Left ventricle myocardium superior (tissue), 1 donor: ENCODE measurements at regions of chr21 and their contacts with region 1.

Region 1: GRCh38 chr21:15064576-15065391 is at the start of gene NRIP1:
- DNase-seq: peak; percentile 95
- ATAC-seq: peak; percentile 94
- total RNA-seq, gene NRIP1: 18.1 TPM

Region 2: DNA sequence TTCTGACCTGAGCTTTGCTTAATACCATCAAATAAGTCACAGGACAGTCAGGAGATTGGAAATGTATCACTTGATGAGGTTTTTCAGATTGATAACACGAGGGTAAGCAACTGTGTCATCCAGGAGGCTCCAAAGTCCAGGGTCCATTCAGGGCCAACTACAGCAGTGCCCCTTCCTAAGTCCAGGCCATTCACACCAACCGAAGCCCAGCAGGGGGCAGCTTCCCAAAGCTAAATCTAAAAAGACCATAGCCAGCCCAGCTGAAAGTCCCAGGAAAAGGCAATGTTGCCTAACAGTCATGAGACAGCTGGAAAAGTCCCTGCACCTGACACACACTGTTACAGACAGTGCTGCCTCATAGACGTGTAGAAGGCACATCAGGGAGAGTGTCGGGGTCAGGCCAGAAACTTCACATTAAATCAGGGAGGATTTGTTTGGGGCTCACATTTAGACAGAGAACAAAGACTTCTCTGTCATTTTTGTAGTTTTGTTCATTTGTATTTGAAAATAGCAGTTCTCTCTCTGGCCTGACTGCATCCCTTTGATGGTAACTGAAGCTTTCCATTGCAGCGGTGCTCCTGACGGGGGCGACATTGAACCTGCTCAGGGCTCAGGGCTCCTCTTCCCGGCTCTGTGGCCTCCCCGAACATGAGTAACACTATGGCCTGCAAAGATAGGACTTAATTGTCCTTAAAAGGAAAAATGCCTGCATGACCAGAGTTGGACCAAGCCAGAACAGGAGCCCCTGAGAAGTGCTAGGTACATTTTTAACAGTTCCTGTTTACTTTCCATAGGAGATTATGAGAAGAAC is 200.4 kb before region 1 on chr21:
- intact Hi-C with region 1: loop called (anchors 10 kb)
- DNase-seq: peak; percentile 78
- ATAC-seq: peak; percentile 94

Region 3: GRCh38 chr21:15001857-15002606 is 62.8 kb before region 1 on chr21:
- intact Hi-C with region 1: loop called (anchors 10 kb)
- DNase-seq: no peak
- ATAC-seq: no peak

Region 4: GRCh38 chr21:15483138-15483780 is 418.5 kb after region 1 on chr21:
- intact Hi-C with region 1: loop called (anchors 10 kb)
- DNase-seq: peak; percentile 86
- ATAC-seq: peak; percentile 100

Region 5: DNA sequence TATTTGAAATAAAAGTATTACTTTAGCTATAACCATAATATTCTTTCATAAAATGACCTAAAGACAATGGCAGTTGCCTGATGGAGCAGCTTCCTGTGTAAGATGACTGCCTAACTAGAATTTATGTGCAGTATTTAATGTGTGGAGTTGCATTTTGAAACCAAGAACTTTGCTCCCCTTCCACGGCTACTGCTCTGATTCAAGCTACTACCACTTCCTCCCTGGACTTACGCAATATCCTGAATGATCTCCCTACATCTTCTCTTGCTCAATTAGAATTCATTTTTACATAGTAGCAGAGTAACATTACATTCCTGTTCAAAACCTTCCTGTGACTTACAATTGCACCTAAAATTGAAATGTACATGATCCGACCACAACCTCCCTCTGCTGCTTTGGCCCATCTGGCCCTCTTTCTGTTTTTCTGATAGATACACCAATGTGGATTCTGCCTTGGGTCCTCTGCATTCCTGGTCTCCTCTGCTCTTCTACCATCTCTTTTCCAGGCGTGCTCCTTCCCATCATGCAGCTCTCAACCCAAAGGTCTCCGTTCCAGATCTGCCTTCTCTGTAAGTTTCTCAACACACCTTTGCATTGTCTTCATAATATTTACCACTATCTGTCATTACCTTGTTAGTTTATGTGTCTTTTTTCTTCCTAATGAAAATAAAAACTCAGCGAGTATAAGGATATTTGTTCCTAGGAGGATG is 617.6 kb after region 1 on chr21:
- intact Hi-C with region 1: no loop called
- DNase-seq: no peak
- ATAC-seq: peak; percentile 50